Endothelial cell of umbilical vein (primary cell): ENCODE measurements at regions of chr5 and their contacts with region 1.

Region 1: GRCh38 chr5:97044052-97044451 is 98.4 kb downstream of the LIX1 start:
- DNase-seq: peak; percentile 66
- H3K4me3 ChIP-seq: no peak overlapping the region
- H3K27ac ChIP-seq: no peak overlapping the region
- H3K4me1 ChIP-seq: peaks cover 5% of the 10 kb centered on the region
- H3K27me3 ChIP-seq: peaks cover 2 to 15% of the 10 kb centered on the region in 2 experiments
- CTCF ChIP-seq: peak; percentile 28 to 55
- POLR2A ChIP-seq: no peak

Region 2: GRCh38 chr5:97162045-97162444 is 118.0 kb after region 1 on chr5:
- CTCF ChIA-PET with region 1: interaction called, 8 read pairs
- POLR2A ChIA-PET with region 1: no interaction called
- dilution Hi-C with region 1: no loop called
- intact Hi-C with region 1: loop called (anchors 1 kb)
- DNase-seq: peak; percentile 86
- H3K4me3 ChIP-seq: no peak overlapping the region
- H3K27ac ChIP-seq: no peak overlapping the region
- H3K4me1 ChIP-seq: no peaks in the 10 kb centered on the region
- H3K27me3 ChIP-seq: no peaks in the 10 kb centered on the region
- CTCF ChIP-seq: peak; percentile 68 to 79
- POLR2A ChIP-seq: no peak

Region 3: DNA sequence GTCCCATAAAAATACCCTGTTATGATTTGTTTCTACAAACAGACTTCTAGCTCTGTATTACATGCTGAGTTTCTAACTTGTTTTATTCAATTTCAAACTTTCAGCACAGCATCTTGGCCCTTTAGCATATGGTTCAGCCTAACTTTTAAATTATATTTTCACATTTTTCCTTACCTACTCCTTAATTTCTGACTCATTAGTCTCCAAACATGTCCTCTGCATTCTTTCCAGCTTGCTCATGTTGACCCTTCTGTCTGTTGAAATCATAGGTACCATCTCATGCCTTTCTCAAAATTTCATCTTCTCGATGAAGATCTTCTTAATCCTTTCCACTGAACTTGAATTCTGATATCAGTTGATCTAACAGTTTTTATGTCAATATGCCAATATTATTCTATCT is 339.9 kb after region 1 on chr5:
- CTCF ChIA-PET with region 1: no interaction called
- POLR2A ChIA-PET with region 1: no interaction called
- dilution Hi-C with region 1: no loop called
- intact Hi-C with region 1: no loop called
- DNase-seq: no peak
- H3K4me3 ChIP-seq: no peak overlapping the region
- H3K27ac ChIP-seq: no peak overlapping the region
- H3K4me1 ChIP-seq: peaks cover 3% of the 10 kb centered on the region
- H3K27me3 ChIP-seq: no peaks in the 10 kb centered on the region
- CTCF ChIP-seq: no peak
- POLR2A ChIP-seq: no peak